Activated CD8-positive, alpha-beta T cell treated with anti-CD3 and anti-CD28 coated beads, Interleukin-2, amount 10 ng/mL, durations not matched to agents 7 days and 5 days (primary cell): ENCODE measurements at regions of chr22 and their contacts with region 1.

Region 1: DNA sequence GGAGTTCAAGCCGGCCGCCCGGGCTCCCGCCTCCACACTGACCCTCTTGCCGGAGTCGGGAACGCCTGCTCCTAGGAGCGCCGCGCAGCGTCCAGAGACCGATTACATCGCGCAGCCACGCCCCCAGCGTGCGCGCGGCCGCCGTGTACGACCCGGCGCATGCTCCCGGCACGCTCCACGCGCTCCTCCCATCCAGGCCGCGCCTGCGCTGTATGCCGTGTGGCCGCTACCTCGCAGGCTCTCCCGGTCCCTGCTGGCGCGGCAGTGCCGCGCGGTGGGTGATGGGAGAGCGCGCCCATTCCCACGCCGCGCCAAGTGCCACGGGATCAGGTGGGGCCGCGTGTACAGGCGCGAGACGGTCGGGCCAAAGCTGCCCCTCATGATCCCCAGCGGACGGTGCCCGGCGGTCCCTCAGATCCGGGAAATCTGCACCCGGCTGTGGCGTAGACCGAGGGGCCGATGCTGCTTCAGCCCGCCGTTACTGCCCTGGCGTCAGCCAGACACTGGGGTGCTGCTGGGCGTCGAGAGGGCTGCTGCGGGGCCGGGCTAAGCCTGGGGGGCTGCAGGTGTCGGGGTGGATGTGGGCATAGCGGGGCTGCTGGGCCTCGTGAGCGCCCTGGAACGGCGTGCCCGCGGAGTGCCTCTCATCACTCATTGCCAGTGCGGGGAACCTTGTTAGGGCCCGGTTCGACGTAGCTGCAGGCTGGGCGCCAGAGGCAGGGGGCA is at the starts of genes GNB1L and RTL10:
- DNase-seq: peak; percentile 96
- ATAC-seq: peak; percentile 95
- H3K4me3 Mint-ChIP-seq: peak within 1 kb of the TSS; percentile 94
- H3K27ac Mint-ChIP-seq: peak within 1 kb of the TSS; percentile 97
- H3K4me1 Mint-ChIP-seq: peaks cover 34% of the 10 kb centered on the region
- H3K27me3 Mint-ChIP-seq: no peaks in the 10 kb centered on the region
- total RNA-seq, gene GNB1L: 9.7 to 10.3 TPM
- total RNA-seq, gene RTL10: 16.1 to 17.0 TPM

Region 2: GRCh38 chr22:19865141-19865829 is 10.3 kb after region 1 on chr22:
- CTCF ChIA-PET with region 1: interaction called, 13 read pairs
- POLR2A ChIA-PET with region 1: interaction called, 3 read pairs
- DNase-seq: no peak
- ATAC-seq: no peak
- H3K4me3 Mint-ChIP-seq: no peak overlapping the region
- H3K27ac Mint-ChIP-seq: no peak overlapping the region
- H3K4me1 Mint-ChIP-seq: no peaks in the 10 kb centered on the region
- H3K27me3 Mint-ChIP-seq: no peaks in the 10 kb centered on the region

Region 3: GRCh38 chr22:19891317-19892256 is 36.6 kb after region 1 on chr22:
- CTCF ChIA-PET with region 1: interaction called, 4 read pairs
- POLR2A ChIA-PET with region 1: interaction called, 20 read pairs
- DNase-seq: peak; percentile 80
- ATAC-seq: peak; percentile 89
- H3K4me3 Mint-ChIP-seq: peak overlapping the region; percentile 70
- H3K27ac Mint-ChIP-seq: peak overlapping the region; percentile 89
- H3K4me1 Mint-ChIP-seq: peaks cover 59% of the 10 kb centered on the region
- H3K27me3 Mint-ChIP-seq: no peaks in the 10 kb centered on the region

Region 4: DNA sequence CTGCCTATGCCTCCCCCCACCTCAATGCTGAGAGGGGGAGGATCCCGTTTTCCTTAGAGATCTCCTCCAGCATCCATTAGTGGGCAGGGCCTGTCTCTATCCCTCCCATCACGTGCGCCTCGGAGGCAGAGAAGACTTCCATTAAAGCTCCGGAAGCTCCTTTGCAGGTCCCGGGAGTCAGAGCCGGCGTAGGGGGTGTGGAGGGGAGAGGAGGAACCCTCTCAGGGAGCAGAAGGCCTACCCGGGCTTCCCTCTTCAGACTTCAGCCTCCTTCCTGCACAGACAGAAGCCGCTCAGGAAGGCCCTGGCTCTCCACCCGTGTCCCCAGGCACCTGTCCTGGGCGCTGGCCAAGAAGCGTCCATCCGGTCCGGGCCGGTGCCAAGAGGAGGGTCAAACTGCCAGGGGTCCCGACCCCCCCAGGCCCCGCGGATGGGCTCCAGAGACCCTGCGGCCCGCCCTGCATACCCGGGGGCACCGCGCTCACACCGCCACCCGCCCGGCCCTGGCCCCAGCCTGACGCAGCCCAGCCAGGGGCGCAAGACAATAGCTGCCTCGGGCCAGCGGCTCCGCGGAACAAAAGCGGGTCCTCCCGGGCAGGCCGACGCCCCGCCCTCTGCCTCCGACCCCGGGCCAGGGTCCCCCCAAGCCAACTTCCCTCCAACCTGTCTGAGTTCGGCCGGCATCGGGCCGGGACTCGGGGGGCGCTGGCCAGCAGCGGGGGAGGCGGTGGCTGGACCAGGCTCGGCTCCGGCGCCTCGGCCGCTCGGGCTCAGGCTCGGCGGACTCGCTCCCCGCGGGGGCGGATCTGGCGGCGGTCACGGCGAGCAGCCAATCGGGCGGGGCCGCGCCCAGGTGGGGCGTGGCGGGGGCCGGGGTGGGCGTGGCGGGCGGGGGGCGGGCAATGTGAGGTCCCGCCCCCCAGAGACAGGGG is 131.7 kb after region 1 on chr22:
- CTCF ChIA-PET with region 1: no interaction called
- POLR2A ChIA-PET with region 1: no interaction called
- DNase-seq: peak; percentile 72
- ATAC-seq: peak; percentile 91
- H3K4me3 Mint-ChIP-seq: peak overlapping the region; percentile 15
- H3K27ac Mint-ChIP-seq: no peak overlapping the region
- H3K4me1 Mint-ChIP-seq: peaks cover 3% of the 10 kb centered on the region
- H3K27me3 Mint-ChIP-seq: no peaks in the 10 kb centered on the region